ENCODE measurements at regions of chr3 and their contacts with region 1.

Region 1: DNA sequence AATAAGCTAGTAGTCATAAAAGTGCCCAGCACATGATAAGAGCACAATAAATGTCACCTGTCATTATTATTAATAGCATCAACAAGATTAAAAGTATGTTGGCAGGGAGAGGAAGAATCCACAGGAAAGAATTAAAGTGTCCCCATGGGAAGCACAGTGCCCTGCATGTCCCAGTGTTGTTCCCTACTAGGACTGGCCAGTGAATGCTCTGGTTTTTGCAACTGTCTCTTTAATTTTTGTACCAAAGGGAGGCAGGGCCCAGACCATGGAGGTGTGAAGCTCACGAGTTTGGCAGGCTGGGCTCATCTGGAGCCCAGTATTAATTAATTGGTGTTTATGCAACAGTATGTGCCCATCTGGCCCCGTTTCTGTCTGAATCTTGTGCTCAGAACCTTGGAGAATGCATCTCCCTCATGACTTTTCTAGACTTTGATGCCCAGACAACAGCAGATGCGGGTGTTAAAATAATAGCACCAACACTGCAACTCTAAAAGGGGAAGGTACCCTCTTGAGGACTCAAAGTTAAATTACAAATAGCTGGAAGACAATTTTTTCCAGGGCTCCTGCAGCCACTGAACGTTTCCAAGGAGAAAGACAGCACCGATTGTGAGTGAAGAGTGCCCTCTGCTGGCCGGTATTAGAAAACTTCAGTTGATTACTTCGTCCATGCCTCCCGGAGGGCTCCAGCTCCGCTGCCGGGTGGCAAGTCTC is 71.9 kb upstream of the SPATA12 start:
- DNase-seq: peak; percentile 82 to 83 (median 82)
- ATAC-seq: peak; percentile 83
- H3K4me3 ChIP-seq: no peak overlapping the region
- H3K27ac ChIP-seq: no peak overlapping the region
- H3K4me1 ChIP-seq: peaks cover 7% of the 10 kb centered on the region
- H3K27me3 ChIP-seq: no peaks in the 10 kb centered on the region

Region 2: DNA sequence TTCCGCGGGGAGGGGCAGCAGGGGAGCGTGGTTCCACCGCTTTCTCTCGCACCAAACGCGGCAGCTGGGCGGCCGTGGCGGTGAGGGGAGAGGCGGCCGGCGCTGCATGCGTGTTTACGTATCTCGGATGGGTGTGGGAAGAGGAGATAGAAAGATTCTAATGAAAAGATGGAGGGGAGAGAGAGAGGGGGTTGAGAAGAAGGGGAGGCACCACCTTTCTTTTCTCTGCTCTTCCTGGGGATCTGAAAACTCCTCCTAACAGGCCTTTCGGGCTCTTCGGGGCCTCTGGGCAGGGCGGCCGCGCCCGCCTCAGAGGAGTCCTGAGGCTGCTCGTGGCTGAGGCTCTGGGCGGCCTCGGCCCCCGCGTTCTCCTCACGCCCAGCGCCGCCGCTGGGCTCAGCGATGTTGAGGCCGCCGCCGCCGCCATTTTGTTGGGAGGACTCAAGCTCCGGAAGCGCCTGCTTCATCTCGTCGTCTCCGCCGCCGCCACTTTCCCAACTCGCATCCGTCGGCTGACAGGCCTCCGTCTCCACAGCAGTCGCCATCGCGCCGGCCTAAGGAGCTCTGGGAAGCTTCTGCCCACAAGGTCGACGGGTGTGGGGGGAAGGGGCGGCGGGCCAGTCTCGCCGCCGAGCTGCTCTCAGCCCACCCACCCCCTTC is 306.0 kb before region 1 on chr3:
- intact Hi-C with region 1: no loop called
- DNase-seq: peak; percentile 75 to 88 (median 88)
- ATAC-seq: peak; percentile 87 to 88
- H3K4me3 ChIP-seq: peak overlapping the region; percentile 74
- H3K27ac ChIP-seq: peak overlapping the region; percentile 98
- H3K4me1 ChIP-seq: no peaks in the 10 kb centered on the region
- H3K27me3 ChIP-seq: no peaks in the 10 kb centered on the region

Region 3: GRCh38 chr3:56702490-56703315 is 285.9 kb before region 1 on chr3:
- intact Hi-C with region 1: loop called (anchors 2 to 5 kb)
- DNase-seq: no peak
- ATAC-seq: peak in 1 of 2 donors; percentile 69
- H3K4me3 ChIP-seq: no peak overlapping the region
- H3K27ac ChIP-seq: no peak overlapping the region
- H3K4me1 ChIP-seq: no peaks in the 10 kb centered on the region
- H3K27me3 ChIP-seq: no peaks in the 10 kb centered on the region

Region 4: GRCh38 chr3:56801662-56802377 is 186.8 kb before region 1 on chr3 and contains the start of gene ARHGEF3:
- intact Hi-C with region 1: loop called in 3 of 4 experiments (anchors 2 to 10 kb)
- DNase-seq: peak; percentile 87 to 95 (median 95)
- ATAC-seq: peak; percentile 98 to 99
- H3K4me3 ChIP-seq: peak within 1 kb of the TSS; percentile 71
- H3K27ac ChIP-seq: peak within 1 kb of the TSS; percentile 4
- H3K4me1 ChIP-seq: peaks cover 4% of the 10 kb centered on the region
- H3K27me3 ChIP-seq: no peaks in the 10 kb centered on the region
- total RNA-seq, gene ARHGEF3: 10.0 to 11.4 (median 11.2) TPM

Region 5: GRCh38 chr3:56923521-56924224 is 64.9 kb before region 1 on chr3:
- intact Hi-C with region 1: loop called in 1 of 4 experiments (anchors 10 kb)
- DNase-seq: peak in 1 of 3 donors; percentile 60
- ATAC-seq: peak; percentile 80 to 88
- H3K4me3 ChIP-seq: no peak overlapping the region
- H3K27ac ChIP-seq: peak overlapping the region; percentile 85
- H3K4me1 ChIP-seq: peaks cover 16% of the 10 kb centered on the region
- H3K27me3 ChIP-seq: no peaks in the 10 kb centered on the region

Measured in right cardiac atrium (tissue), 5 donors.